B cell (primary cell): ENCODE measurements at regions of chr21 and their contacts with region 1.

Region 1: GRCh38 chr21:45140346-45140940 is 66.1 kb downstream of the ADARB1 start:
- DNase-seq: peak; percentile 80
- ATAC-seq: peak; percentile 93
- H3K4me3 ChIP-seq: no peak overlapping the region
- H3K4me3 Mint-ChIP-seq: no peak overlapping the region
- H3K27ac ChIP-seq: no peak overlapping the region
- H3K27ac Mint-ChIP-seq: peak overlapping the region; percentile 57
- H3K4me1 ChIP-seq: peaks cover 0 to 8% of the 10 kb centered on the region in 2 donors
- H3K4me1 Mint-ChIP-seq: peaks cover 17% of the 10 kb centered on the region
- H3K27me3 ChIP-seq: no peaks in the 10 kb centered on the region
- H3K27me3 Mint-ChIP-seq: no peaks in the 10 kb centered on the region
- CTCF ChIP-seq: peak; percentile 71

Region 2: GRCh38 chr21:44801468-44802395 is 338.7 kb before region 1 on chr21 and contains the start of gene UBE2G2:
- CTCF ChIA-PET with region 1: interaction called, 11 read pairs
- POLR2A ChIA-PET with region 1: no interaction called
- intact Hi-C with region 1: no loop called
- DNase-seq: peak; percentile 91
- ATAC-seq: peak; percentile 90
- H3K4me3 ChIP-seq: peak within 1 kb of the TSS; percentile 63 to 87 (median 78)
- H3K4me3 Mint-ChIP-seq: peak within 1 kb of the TSS; percentile 100
- H3K27ac ChIP-seq: peak within 1 kb of the TSS; percentile 65 to 75
- H3K27ac Mint-ChIP-seq: peak within 1 kb of the TSS; percentile 95
- H3K4me1 ChIP-seq: peaks cover 19 to 21% of the 10 kb centered on the region in 2 donors
- H3K4me1 Mint-ChIP-seq: peaks cover 40% of the 10 kb centered on the region
- H3K27me3 ChIP-seq: no peaks in the 10 kb centered on the region
- H3K27me3 Mint-ChIP-seq: no peaks in the 10 kb centered on the region
- CTCF ChIP-seq: no peak
- total RNA-seq, gene UBE2G2: 96.4 and 97.2 TPM in 2 replicates

Region 3: GRCh38 chr21:44949779-44950198 is 190.7 kb before region 1 on chr21:
- CTCF ChIA-PET with region 1: interaction called, 355 read pairs
- POLR2A ChIA-PET with region 1: no interaction called
- intact Hi-C with region 1: loop called (anchors 1 kb)
- DNase-seq: peak; percentile 85
- ATAC-seq: peak; percentile 84
- H3K4me3 ChIP-seq: no peak overlapping the region
- H3K4me3 Mint-ChIP-seq: no peak overlapping the region
- H3K27ac ChIP-seq: no peak overlapping the region
- H3K27ac Mint-ChIP-seq: peak overlapping the region; percentile 50
- H3K4me1 ChIP-seq: peaks cover 17 to 37% of the 10 kb centered on the region in 2 donors
- H3K4me1 Mint-ChIP-seq: peaks cover 27% of the 10 kb centered on the region
- H3K27me3 ChIP-seq: no peaks in the 10 kb centered on the region
- H3K27me3 Mint-ChIP-seq: no peaks in the 10 kb centered on the region
- CTCF ChIP-seq: peak; percentile 96

Region 4: GRCh38 chr21:45098867-45099266 is 41.6 kb before region 1 on chr21:
- CTCF ChIA-PET with region 1: interaction called, 52 read pairs
- POLR2A ChIA-PET with region 1: no interaction called
- intact Hi-C with region 1: no loop called
- DNase-seq: peak; percentile 42
- ATAC-seq: no peak
- H3K4me3 ChIP-seq: no peak overlapping the region
- H3K4me3 Mint-ChIP-seq: peak overlapping the region; percentile 16
- H3K27ac ChIP-seq: peak overlapping the region in 1 of 2 donors; percentile 6
- H3K27ac Mint-ChIP-seq: peak overlapping the region; percentile 60
- H3K4me1 ChIP-seq: peaks cover 74 to 81% of the 10 kb centered on the region in 2 donors
- H3K4me1 Mint-ChIP-seq: peaks cover 77% of the 10 kb centered on the region
- H3K27me3 ChIP-seq: no peaks in the 10 kb centered on the region
- H3K27me3 Mint-ChIP-seq: no peaks in the 10 kb centered on the region
- CTCF ChIP-seq: peak; percentile 32

Region 5: GRCh38 chr21:45130324-45130774 is 10.1 kb before region 1 on chr21:
- CTCF ChIA-PET with region 1: interaction called, 183 read pairs
- POLR2A ChIA-PET with region 1: no interaction called
- intact Hi-C with region 1: no loop called
- DNase-seq: no peak
- ATAC-seq: no peak
- H3K4me3 ChIP-seq: no peak overlapping the region
- H3K4me3 Mint-ChIP-seq: no peak overlapping the region
- H3K27ac ChIP-seq: no peak overlapping the region
- H3K27ac Mint-ChIP-seq: no peak overlapping the region
- H3K4me1 ChIP-seq: peaks cover 55 to 57% of the 10 kb centered on the region in 2 donors
- H3K4me1 Mint-ChIP-seq: peaks cover 62% of the 10 kb centered on the region
- H3K27me3 ChIP-seq: no peaks in the 10 kb centered on the region
- H3K27me3 Mint-ChIP-seq: no peaks in the 10 kb centered on the region
- CTCF ChIP-seq: no peak

Region 6: DNA sequence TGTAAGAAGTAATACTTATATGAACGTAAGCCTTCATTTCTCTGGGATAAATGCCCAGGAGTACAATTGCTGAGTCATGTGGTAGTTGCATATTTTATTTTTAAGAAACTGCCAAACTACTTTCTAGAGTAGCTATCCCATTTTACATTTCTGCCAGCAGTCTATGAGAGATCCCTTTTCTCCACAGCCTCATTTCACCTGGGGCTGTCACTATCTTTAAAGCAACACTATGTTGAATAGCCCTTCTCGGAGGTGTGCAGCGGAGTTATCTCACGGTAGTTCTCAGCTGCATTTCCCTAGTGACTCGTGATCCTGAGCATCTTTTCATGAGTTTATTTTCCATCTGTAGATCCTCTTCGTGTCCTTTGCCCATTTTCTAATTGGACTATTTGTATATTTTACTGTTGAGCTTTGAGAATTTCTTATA is 27.4 kb after region 1 on chr21:
- CTCF ChIA-PET with region 1: interaction called, 14 read pairs
- POLR2A ChIA-PET with region 1: interaction called, 3 read pairs
- intact Hi-C with region 1: no loop called
- DNase-seq: no peak
- ATAC-seq: no peak
- H3K4me3 ChIP-seq: no peak overlapping the region
- H3K4me3 Mint-ChIP-seq: no peak overlapping the region
- H3K27ac ChIP-seq: no peak overlapping the region
- H3K27ac Mint-ChIP-seq: no peak overlapping the region
- H3K4me1 ChIP-seq: peaks cover 0 to 3% of the 10 kb centered on the region in 2 donors
- H3K4me1 Mint-ChIP-seq: peaks cover 6% of the 10 kb centered on the region
- H3K27me3 ChIP-seq: no peaks in the 10 kb centered on the region
- H3K27me3 Mint-ChIP-seq: no peaks in the 10 kb centered on the region
- CTCF ChIP-seq: no peak

Region 7: GRCh38 chr21:45228171-45228641 is 87.8 kb after region 1 on chr21:
- CTCF ChIA-PET with region 1: no interaction called
- POLR2A ChIA-PET with region 1: no interaction called
- intact Hi-C with region 1: no loop called
- DNase-seq: no peak
- ATAC-seq: no peak
- H3K4me3 ChIP-seq: no peak overlapping the region
- H3K4me3 Mint-ChIP-seq: no peak overlapping the region
- H3K27ac ChIP-seq: no peak overlapping the region
- H3K27ac Mint-ChIP-seq: no peak overlapping the region
- H3K4me1 ChIP-seq: peaks cover 3 to 8% of the 10 kb centered on the region in 2 donors
- H3K4me1 Mint-ChIP-seq: peaks cover 27% of the 10 kb centered on the region
- H3K27me3 ChIP-seq: no peaks in the 10 kb centered on the region
- H3K27me3 Mint-ChIP-seq: peaks cover 8% of the 10 kb centered on the region
- CTCF ChIP-seq: no peak

Region 8: DNA sequence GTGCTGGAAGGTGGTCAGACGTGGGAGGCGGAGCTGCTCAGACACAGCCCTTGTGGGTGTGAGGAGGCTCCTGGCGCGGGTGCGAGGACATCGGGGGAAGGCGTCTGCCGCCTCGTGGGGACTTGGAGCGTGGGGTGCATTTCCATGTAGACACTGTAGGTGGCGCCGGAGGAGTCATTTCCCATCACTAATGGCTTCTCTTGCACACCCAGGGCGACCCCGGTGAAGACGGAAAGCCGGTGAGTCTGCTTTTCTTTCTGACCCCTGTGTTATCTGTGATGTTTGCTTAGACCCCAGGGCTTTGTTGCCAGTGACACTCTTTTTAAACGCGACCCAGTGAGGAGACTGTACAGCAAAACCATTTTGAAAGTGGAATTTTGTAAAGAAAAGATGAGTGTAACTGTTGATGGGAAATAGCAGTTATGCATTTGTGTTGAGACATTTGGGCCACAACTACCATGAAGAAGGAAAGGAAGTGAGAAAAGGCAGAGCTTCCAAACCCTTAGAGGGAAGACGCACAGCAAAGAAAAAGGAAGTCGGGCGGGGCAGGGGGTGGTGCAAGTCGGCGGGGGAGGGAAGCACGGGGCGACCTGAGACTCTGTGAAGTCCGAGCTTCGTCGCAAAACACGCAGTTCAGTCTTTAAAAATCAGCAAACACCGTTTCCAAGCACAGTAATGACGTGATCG is 337.8 kb after region 1 on chr21:
- CTCF ChIA-PET with region 1: interaction called, 3 read pairs
- POLR2A ChIA-PET with region 1: no interaction called
- intact Hi-C with region 1: loop called (anchors 2 kb)
- DNase-seq: peak; percentile 85
- ATAC-seq: peak; percentile 83
- H3K4me3 ChIP-seq: peak overlapping the region; percentile 11 to 53 (median 45)
- H3K4me3 Mint-ChIP-seq: peak overlapping the region; percentile 78
- H3K27ac ChIP-seq: peak overlapping the region; percentile 54 to 76
- H3K27ac Mint-ChIP-seq: peak overlapping the region; percentile 78
- H3K4me1 ChIP-seq: peaks cover 28 to 43% of the 10 kb centered on the region in 2 donors
- H3K4me1 Mint-ChIP-seq: peaks cover 29% of the 10 kb centered on the region
- H3K27me3 ChIP-seq: no peaks in the 10 kb centered on the region
- H3K27me3 Mint-ChIP-seq: no peaks in the 10 kb centered on the region
- CTCF ChIP-seq: peak; percentile 91